Esophagus muscularis mucosa (tissue), 4 donors: ENCODE measurements at regions of chr14 and their contacts with region 1.

Region 1: DNA sequence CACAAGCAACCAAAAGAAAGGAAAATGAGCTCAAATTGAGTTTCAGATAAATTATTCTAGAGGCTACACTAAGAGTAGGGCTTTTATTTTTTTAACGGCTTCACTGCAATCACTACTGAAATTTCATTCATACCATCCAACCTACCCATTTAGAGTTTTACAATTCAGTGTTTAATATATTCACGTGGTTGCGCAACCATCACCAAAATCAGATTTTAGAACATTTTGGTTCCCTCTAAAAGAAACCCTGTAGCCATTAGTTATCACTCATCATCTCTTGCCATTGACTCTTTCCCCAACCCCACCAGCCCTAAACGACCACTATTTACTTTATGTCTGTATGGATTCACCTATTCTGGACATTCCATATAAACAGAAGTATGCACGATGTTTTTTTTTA is 401.5 kb downstream of the MDGA2 start:
- DNase-seq: no peak
- H3K4me3 ChIP-seq: no peak overlapping the region
- H3K27ac ChIP-seq: no peak overlapping the region
- H3K4me1 ChIP-seq: no peaks in the 10 kb centered on the region
- H3K27me3 ChIP-seq: no peaks in the 10 kb centered on the region
- CTCF ChIP-seq: no peak
- EP300 ChIP-seq: no peak
- POLR2A ChIP-seq: no peak

Region 2: GRCh38 chr14:47009615-47010014 is 264.3 kb before region 1 on chr14:
- intact Hi-C with region 1: no loop called
- DNase-seq: no peak
- H3K4me3 ChIP-seq: no peak overlapping the region
- H3K27ac ChIP-seq: no peak overlapping the region
- H3K4me1 ChIP-seq: no peaks in the 10 kb centered on the region
- H3K27me3 ChIP-seq: no peaks in the 10 kb centered on the region
- CTCF ChIP-seq: no peak
- EP300 ChIP-seq: no peak
- POLR2A ChIP-seq: no peak

Region 3: GRCh38 chr14:47332939-47333338 is 59.0 kb after region 1 on chr14:
- intact Hi-C with region 1: loop called (anchors 2 kb)
- DNase-seq: no peak
- H3K4me3 ChIP-seq: no peak overlapping the region
- H3K27ac ChIP-seq: no peak overlapping the region
- H3K4me1 ChIP-seq: no peaks in the 10 kb centered on the region
- H3K27me3 ChIP-seq: no peaks in the 10 kb centered on the region
- CTCF ChIP-seq: no peak
- EP300 ChIP-seq: no peak
- POLR2A ChIP-seq: no peak

Region 4: GRCh38 chr14:47353186-47353585 is 79.2 kb after region 1 on chr14:
- intact Hi-C with region 1: no loop called
- DNase-seq: no peak
- H3K4me3 ChIP-seq: no peak overlapping the region
- H3K27ac ChIP-seq: no peak overlapping the region
- H3K4me1 ChIP-seq: no peaks in the 10 kb centered on the region
- H3K27me3 ChIP-seq: no peaks in the 10 kb centered on the region
- CTCF ChIP-seq: no peak
- EP300 ChIP-seq: no peak
- POLR2A ChIP-seq: no peak